Heart left ventricle (tissue), 16 donors: ENCODE measurements at regions of chr15 and their contacts with region 1.

Region 1: GRCh38 chr15:100349696-100350433 is 8.1 kb upstream of the ADAMTS17 start:
- DNase-seq: peak; percentile 92 to 96 (median 93)
- ATAC-seq: peak; percentile 96 to 98 (median 97)
- H3K4me3 ChIP-seq: peak overlapping the region; percentile 63 to 90 (median 80)
- H3K27ac ChIP-seq: peak overlapping the region; percentile 80 to 99 (median 94)
- H3K4me1 ChIP-seq: peaks cover 0 to 11% (median 7%) of the 10 kb centered on the region in 12 donors
- H3K27me3 ChIP-seq: peaks cover 0 to 22% (median 8%) of the 10 kb centered on the region in 9 donors
- CTCF ChIP-seq: peak; percentile 64 to 91 (median 84)
- POLR2A ChIP-seq: peak in 1 of 2 donors; percentile 55

Region 2: GRCh38 chr15:100572362-100572983 is 222.6 kb after region 1 on chr15:
- intact Hi-C with region 1: loop called (anchors 1 to 5 kb)
- DNase-seq: no peak
- ATAC-seq: no peak
- H3K4me3 ChIP-seq: no peak overlapping the region
- H3K27ac ChIP-seq: no peak overlapping the region
- H3K4me1 ChIP-seq: no peaks in the 10 kb centered on the region
- H3K27me3 ChIP-seq: no peaks in the 10 kb centered on the region
- CTCF ChIP-seq: peak; percentile 43 to 75 (median 62)
- POLR2A ChIP-seq: no peak

Region 3: GRCh38 chr15:101008158-101009139 is 658.6 kb after region 1 on chr15:
- intact Hi-C with region 1: loop called in 6 of 10 experiments (anchors 5 to 10 kb)
- DNase-seq: peak; percentile 70 to 92 (median 79)
- ATAC-seq: peak; percentile 82 to 89 (median 86)
- H3K4me3 ChIP-seq: peak overlapping the region in 11 of 12 donors; percentile 30 to 69 (median 50)
- H3K27ac ChIP-seq: peak overlapping the region in 1 of 12 donors; percentile 48
- H3K4me1 ChIP-seq: peaks cover 0 to 20% (median 11%) of the 10 kb centered on the region in 12 donors
- H3K27me3 ChIP-seq: no peaks in the 10 kb centered on the region
- CTCF ChIP-seq: peak; percentile 91 to 99 (median 97)
- POLR2A ChIP-seq: peak in 1 of 2 donors; percentile 14